Heart left ventricle (tissue), 16 donors: ENCODE measurements at regions of chr9 and their contacts with region 1.

Region 1: GRCh38 chr9:91500509-91501011 is 76.9 kb upstream of the NFIL3 start:
- DNase-seq: no peak
- ATAC-seq: peak in 1 of 4 donors; percentile 60
- H3K4me3 ChIP-seq: no peak overlapping the region
- H3K27ac ChIP-seq: no peak overlapping the region
- H3K4me1 ChIP-seq: no peaks in the 10 kb centered on the region
- H3K27me3 ChIP-seq: no peaks in the 10 kb centered on the region
- CTCF ChIP-seq: no peak
- POLR2A ChIP-seq: no peak

Region 2: DNA sequence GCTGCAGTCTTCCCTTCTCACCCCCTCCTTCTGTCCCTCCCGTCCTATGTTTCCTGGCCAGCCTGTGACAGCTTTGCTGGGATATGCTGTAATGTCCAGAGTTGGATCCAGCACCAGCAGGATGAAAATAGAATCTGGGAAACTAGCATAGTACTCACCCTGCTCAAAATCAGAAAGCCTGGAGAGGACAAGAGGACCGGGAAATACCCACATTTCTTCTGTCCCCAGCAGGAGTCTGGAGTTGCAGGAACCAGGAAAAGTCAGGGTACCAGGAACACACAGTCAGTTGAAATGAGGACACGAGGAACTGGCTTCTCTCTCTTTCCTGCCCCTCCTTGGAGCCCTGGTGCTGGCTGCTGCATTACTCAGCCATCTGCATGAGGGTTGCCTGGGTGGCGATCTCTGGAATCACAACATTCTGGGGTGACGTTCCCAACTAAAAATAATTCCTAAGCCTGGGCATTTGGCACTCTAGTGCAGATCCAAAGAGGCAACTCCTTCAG is 17.3 kb before region 1 on chr9:
- intact Hi-C with region 1: loop called in 1 of 10 experiments (anchors 1 kb)
- DNase-seq: peak; percentile 57 to 84 (median 68)
- ATAC-seq: peak; percentile 91 to 95 (median 93)
- H3K4me3 ChIP-seq: peak overlapping the region in 8 of 12 donors; percentile 2 to 41 (median 27)
- H3K27ac ChIP-seq: peak overlapping the region; percentile 77 to 93 (median 87)
- H3K4me1 ChIP-seq: peaks cover 0 to 30% (median 4%) of the 10 kb centered on the region in 12 donors
- H3K27me3 ChIP-seq: no peaks in the 10 kb centered on the region
- CTCF ChIP-seq: no peak
- POLR2A ChIP-seq: no peak

Region 3: DNA sequence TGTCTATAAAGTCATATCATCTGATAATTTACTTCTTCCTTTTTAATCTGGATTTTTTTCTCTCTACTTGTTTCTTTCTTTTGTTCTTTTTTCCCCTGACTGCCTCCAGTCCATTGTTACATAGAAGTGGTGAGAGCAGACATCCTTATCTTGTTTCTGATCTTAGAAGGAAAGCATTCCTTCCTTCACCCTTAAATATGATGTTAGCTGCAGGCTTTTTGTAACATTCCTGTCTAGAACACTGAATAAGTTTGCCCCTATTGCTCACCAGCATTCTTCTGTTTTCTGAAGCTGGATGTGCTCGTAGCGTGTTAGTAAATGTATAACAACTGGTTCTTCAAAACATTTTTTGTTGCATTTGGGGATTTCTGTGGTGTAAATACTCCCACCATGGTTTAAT is 59.7 kb after region 1 on chr9:
- intact Hi-C with region 1: loop called in 1 of 10 experiments (anchors 10 kb)
- DNase-seq: no peak
- ATAC-seq: no peak
- H3K4me3 ChIP-seq: no peak overlapping the region
- H3K27ac ChIP-seq: no peak overlapping the region
- H3K4me1 ChIP-seq: no peaks in the 10 kb centered on the region
- H3K27me3 ChIP-seq: no peaks in the 10 kb centered on the region
- CTCF ChIP-seq: no peak
- POLR2A ChIP-seq: no peak